Endothelial cell of umbilical vein (primary cell): ENCODE measurements at regions of chr20 and their contacts with region 1.

Region 1: GRCh38 chr20:47950073-47950913 is 165.0 kb upstream of the SULF2 start:
- DNase-seq: peak; percentile 77
- H3K4me3 ChIP-seq: no peak overlapping the region
- H3K27ac ChIP-seq: peak overlapping the region; percentile 69
- H3K4me1 ChIP-seq: peaks cover 26% of the 10 kb centered on the region
- H3K27me3 ChIP-seq: no peaks in the 10 kb centered on the region
- CTCF ChIP-seq: no peak
- POLR2A ChIP-seq: no peak

Region 2: GRCh38 chr20:47561180-47561579 is 389.1 kb before region 1 on chr20:
- CTCF ChIA-PET with region 1: no interaction called
- POLR2A ChIA-PET with region 1: no interaction called
- dilution Hi-C with region 1: no loop called
- intact Hi-C with region 1: no loop called
- DNase-seq: no peak
- H3K4me3 ChIP-seq: no peak overlapping the region
- H3K27ac ChIP-seq: no peak overlapping the region
- H3K4me1 ChIP-seq: no peaks in the 10 kb centered on the region
- H3K27me3 ChIP-seq: no peaks in the 10 kb centered on the region
- CTCF ChIP-seq: no peak
- POLR2A ChIP-seq: no peak

Region 3: GRCh38 chr20:47985092-47985850 is 35.0 kb after region 1 on chr20:
- CTCF ChIA-PET with region 1: no interaction called
- POLR2A ChIA-PET with region 1: no interaction called
- dilution Hi-C with region 1: no loop called
- intact Hi-C with region 1: no loop called
- DNase-seq: peak; percentile 32
- H3K4me3 ChIP-seq: no peak overlapping the region
- H3K27ac ChIP-seq: no peak overlapping the region
- H3K4me1 ChIP-seq: peaks cover 8% of the 10 kb centered on the region
- H3K27me3 ChIP-seq: no peaks in the 10 kb centered on the region
- CTCF ChIP-seq: no peak
- POLR2A ChIP-seq: no peak

Region 4: GRCh38 chr20:48275685-48276342 is 325.5 kb after region 1 on chr20:
- CTCF ChIA-PET with region 1: no interaction called
- POLR2A ChIA-PET with region 1: no interaction called
- dilution Hi-C with region 1: no loop called
- intact Hi-C with region 1: loop called (anchors 5 kb)
- DNase-seq: no peak
- H3K4me3 ChIP-seq: no peak overlapping the region
- H3K27ac ChIP-seq: no peak overlapping the region
- H3K4me1 ChIP-seq: peaks cover 19% of the 10 kb centered on the region
- H3K27me3 ChIP-seq: peaks cover 0 to 5% of the 10 kb centered on the region in 2 experiments
- CTCF ChIP-seq: no peak
- POLR2A ChIP-seq: no peak